ENCODE measurements at regions of chr2 and their contacts with region 1.

Region 1: DNA sequence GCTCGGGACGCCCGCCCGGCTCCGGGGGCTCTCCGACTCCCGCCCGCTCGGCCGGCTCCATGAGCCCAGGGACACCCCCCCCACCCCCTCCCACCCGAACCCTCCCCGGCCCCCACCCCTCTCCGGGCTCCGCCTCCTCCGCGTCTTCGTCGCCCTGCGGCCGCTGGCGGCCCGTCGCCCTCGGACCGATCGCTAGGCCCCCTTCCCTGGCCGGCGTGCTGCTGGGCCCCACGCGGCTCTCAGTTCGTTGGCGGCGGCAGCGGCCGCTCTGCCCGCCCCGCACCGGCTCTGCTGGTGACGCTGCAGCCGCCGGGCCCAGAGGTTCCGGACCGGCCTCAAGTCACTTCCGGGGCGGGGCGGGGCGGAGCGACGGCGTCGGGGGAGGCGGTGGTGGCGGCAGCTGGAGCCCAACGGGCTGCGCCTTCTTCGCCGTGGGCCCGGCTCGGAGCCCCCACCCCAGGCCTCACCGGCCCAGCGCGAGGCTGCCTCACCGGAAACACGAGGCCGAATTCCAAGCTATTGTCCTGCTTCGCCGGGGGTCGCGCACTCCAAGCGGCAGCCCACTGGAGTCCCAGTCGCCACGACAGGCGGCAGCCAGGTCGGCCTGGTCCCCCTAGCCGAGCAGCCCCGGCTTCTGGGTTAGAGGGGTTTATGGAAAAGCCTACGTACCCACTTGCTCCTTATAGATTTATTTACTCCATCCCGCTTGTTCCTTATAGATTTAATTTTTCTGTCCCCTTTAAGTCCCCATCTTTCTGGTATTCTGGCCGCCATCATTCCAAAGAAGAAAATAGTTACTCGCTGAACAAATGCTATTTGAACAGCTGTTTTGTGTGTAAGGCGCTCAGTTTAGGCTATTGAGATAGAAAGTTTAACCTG is at the start of gene PSME4:
- DNase-seq: peak; percentile 92 to 99 (median 94)

Region 2: DNA sequence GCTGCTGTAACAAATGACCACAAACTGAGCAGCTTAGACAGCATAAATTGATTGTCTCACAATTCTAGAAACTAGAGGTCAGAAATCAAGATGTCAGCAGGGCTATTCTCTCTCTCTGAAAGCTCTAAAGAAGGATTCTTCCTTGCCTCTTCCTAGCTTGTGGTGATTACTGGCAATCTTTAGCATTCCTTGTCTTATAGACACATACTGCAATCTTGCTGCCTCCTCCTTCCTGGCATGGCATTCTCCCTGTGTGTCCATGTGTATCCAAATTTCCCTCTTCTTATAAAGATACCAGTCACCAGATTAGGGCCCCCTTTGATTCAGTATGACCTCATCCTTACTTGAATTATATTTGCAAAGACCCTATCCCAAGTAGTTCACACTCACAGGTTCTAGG is 186.5 kb before region 1 on chr2:
- intact Hi-C with region 1: no loop called
- DNase-seq: no peak

Region 3: GRCh38 chr2:54042897-54043620 is 72.1 kb after region 1 on chr2:
- intact Hi-C with region 1: loop called (anchors 2 kb)
- DNase-seq: peak in 5 of 10 donors; percentile 20 to 87 (median 45)